HEK293 (cell line): ENCODE measurements at regions of chr15 and their contacts with region 1.

Region 1: DNA sequence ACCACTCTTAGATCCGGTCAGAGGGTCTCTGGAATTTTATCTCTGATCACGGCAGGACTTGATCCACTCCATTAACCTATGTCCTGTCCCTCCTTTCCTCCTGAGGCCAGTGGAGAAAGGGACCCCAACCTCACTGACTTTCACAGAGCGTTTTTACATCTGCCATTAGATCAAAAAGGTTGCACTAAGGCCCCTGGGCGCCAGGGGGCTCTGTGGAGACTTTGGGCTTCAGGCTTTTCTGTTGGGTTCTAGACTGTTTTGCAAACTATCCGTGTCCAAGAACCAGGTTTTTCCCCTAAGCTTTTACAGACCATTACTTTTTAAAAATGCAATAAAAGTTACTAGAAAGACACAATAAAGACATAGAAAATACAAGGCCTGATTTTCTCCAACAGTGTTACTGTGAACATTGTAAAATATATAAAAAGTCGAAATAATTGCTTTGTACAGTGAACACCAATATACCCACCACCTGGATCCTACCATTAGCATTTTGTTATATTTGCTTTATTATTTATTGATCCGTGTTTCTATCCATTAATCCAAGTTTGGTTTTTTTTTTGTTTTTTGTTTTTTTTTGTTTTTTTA is 159.7 kb downstream of the POLR2M start:
- H3K4me3 ChIP-seq: no peak overlapping the region
- H3K27ac ChIP-seq: no peak overlapping the region
- H3K4me1 ChIP-seq: no peaks in the 10 kb centered on the region
- CTCF ChIP-seq: no peak

Region 2: DNA sequence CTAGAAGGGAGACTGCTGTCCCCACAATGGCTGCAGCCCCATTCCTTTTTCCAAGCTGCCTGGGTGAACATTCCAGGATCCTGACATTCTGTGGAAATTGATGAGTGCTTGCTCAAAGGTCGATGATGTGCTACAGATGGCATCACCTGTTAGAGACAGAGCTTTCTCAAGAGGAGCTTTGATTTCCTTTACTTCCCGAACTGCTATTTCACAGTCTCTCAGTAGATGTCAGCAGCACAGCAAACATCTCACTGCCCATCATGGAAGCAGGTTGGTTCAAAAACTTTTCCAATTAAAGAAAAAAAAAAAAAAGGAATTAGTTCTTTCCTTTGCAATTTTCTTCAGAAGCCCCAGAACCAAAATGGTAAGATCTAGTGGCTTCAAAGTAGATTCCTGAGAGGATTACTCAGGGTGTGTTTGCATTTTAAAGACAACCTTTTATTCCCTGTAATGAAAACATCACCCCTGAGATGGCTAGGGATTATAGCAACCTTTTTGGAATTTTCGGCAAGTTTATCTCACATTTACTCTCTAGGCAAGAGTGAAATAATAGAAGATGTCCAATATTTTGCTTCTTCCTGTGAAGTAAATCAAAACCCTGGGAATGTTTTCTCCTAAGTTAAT is 115.0 kb before region 1 on chr15:
- CTCF ChIA-PET with region 1: interaction called, 57 read pairs
- POLR2A ChIA-PET with region 1: no interaction called
- H3K4me3 ChIP-seq: no peak overlapping the region
- H3K27ac ChIP-seq: no peak overlapping the region
- H3K4me1 ChIP-seq: peaks cover 4% of the 10 kb centered on the region; the same call in 1 of the 2 replicates
- CTCF ChIP-seq: no peak